Calu3 (cell line): ENCODE measurements at regions of chr6 and their contacts with region 1.

Region 1: DNA sequence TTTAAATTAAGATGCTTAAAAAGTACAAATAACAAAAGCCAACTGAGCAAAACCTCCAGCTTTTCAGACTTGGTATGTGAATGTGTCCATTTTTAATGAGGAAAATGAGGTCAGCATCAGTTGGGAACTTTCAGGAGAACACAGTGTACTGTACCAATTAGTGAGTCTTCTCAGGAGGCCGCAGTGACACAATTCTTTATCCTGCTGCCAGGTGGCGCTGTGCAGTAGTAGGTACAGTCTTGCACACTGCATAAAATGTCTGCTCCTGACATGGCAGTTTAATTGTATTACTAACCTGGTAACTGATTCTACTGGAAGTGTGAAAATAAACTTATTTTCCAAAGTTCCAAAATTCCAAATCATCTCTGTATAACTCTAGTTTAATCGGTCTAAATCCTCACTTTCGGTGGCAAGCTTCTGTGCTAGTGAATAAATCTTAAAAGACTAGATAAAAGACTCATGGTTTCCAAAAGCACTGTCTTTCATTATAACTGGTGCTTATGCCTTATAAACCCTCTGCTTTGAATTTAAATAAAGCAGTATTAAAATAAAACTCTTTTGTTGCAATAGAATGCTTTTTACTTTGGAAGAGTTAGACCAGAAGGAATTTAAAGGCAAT is 214.8 kb upstream of the MMS22L start:
- DNase-seq: peak; percentile 65
- H3K4me3 Mint-ChIP-seq: no peak overlapping the region
- H3K27ac Mint-ChIP-seq: no peak overlapping the region
- H3K4me1 Mint-ChIP-seq: no peaks in the 10 kb centered on the region
- H3K27me3 Mint-ChIP-seq: no peaks in the 10 kb centered on the region
- CTCF ChIP-seq: peak; percentile 70

Region 2: DNA sequence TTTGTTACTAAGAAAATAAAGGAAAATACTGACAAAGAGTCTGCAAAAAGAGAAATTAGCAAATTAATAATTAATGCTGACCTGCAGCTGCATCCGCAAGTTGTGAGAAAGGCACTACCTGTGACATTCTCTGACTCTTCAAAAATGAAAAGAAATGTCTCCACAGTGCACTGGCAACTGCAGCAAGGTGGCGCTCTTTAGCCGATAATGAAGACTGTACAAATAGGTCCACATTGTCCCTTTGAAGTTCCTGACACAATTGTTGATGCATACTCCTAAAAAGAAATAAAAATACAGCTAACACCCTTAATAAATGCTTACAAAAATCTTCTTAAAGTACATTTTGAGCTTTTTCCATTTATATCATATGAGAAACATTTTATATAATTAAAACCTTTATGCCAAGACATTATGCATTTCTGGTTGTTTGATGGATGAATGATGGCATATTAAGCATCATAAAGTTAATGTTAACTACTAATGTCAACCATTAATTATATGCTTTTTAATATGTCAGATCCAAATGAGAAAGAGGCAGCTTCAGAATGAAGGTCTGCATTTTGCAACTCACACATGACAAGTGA is 311.3 kb before region 1 on chr6:
- CTCF ChIA-PET with region 1: no interaction called
- intact Hi-C with region 1: no loop called
- DNase-seq: peak; percentile 67
- H3K4me3 Mint-ChIP-seq: no peak overlapping the region
- H3K27ac Mint-ChIP-seq: no peak overlapping the region
- H3K4me1 Mint-ChIP-seq: no peaks in the 10 kb centered on the region
- H3K27me3 Mint-ChIP-seq: no peaks in the 10 kb centered on the region
- CTCF ChIP-seq: peak; percentile 66

Region 3: GRCh38 chr6:97305414-97306066 is 192.3 kb before region 1 on chr6:
- CTCF ChIA-PET with region 1: no interaction called
- intact Hi-C with region 1: no loop called
- DNase-seq: no peak
- H3K4me3 Mint-ChIP-seq: no peak overlapping the region
- H3K27ac Mint-ChIP-seq: no peak overlapping the region
- H3K4me1 Mint-ChIP-seq: no peaks in the 10 kb centered on the region
- H3K27me3 Mint-ChIP-seq: no peaks in the 10 kb centered on the region
- CTCF ChIP-seq: no peak

Region 4: GRCh38 chr6:97925504-97925903 is 427.7 kb after region 1 on chr6:
- CTCF ChIA-PET with region 1: no interaction called
- intact Hi-C with region 1: loop called (anchors 2 kb)
- DNase-seq: no peak
- H3K4me3 Mint-ChIP-seq: no peak overlapping the region
- H3K27ac Mint-ChIP-seq: no peak overlapping the region
- H3K4me1 Mint-ChIP-seq: no peaks in the 10 kb centered on the region
- H3K27me3 Mint-ChIP-seq: no peaks in the 10 kb centered on the region
- CTCF ChIP-seq: no peak

Region 5: GRCh38 chr6:98039869-98040607 is 542.2 kb after region 1 on chr6:
- CTCF ChIA-PET with region 1: no interaction called
- intact Hi-C with region 1: loop called (anchors 1 kb)
- DNase-seq: no peak
- H3K4me3 Mint-ChIP-seq: no peak overlapping the region
- H3K27ac Mint-ChIP-seq: no peak overlapping the region
- H3K4me1 Mint-ChIP-seq: no peaks in the 10 kb centered on the region
- H3K27me3 Mint-ChIP-seq: no peaks in the 10 kb centered on the region
- CTCF ChIP-seq: no peak